Esophagus muscularis mucosa (tissue), 4 donors: ENCODE measurements at regions of chr1 and their contacts with region 1.

Region 1: GRCh38 chr1:161389691-161390558 is 22.2 kb upstream of the CFAP126 start:
- DNase-seq: peak; percentile 99
- H3K4me3 ChIP-seq: peak overlapping the region; percentile 57 to 86 (median 71)
- H3K27ac ChIP-seq: peak overlapping the region; percentile 91 to 93 (median 92)
- H3K4me1 ChIP-seq: peaks cover 8 to 15% (median 11%) of the 10 kb centered on the region in 4 donors
- H3K27me3 ChIP-seq: no peaks in the 10 kb centered on the region
- CTCF ChIP-seq: no peak
- EP300 ChIP-seq: peak; percentile 100
- POLR2A ChIP-seq: peak; percentile 77

Region 2: DNA sequence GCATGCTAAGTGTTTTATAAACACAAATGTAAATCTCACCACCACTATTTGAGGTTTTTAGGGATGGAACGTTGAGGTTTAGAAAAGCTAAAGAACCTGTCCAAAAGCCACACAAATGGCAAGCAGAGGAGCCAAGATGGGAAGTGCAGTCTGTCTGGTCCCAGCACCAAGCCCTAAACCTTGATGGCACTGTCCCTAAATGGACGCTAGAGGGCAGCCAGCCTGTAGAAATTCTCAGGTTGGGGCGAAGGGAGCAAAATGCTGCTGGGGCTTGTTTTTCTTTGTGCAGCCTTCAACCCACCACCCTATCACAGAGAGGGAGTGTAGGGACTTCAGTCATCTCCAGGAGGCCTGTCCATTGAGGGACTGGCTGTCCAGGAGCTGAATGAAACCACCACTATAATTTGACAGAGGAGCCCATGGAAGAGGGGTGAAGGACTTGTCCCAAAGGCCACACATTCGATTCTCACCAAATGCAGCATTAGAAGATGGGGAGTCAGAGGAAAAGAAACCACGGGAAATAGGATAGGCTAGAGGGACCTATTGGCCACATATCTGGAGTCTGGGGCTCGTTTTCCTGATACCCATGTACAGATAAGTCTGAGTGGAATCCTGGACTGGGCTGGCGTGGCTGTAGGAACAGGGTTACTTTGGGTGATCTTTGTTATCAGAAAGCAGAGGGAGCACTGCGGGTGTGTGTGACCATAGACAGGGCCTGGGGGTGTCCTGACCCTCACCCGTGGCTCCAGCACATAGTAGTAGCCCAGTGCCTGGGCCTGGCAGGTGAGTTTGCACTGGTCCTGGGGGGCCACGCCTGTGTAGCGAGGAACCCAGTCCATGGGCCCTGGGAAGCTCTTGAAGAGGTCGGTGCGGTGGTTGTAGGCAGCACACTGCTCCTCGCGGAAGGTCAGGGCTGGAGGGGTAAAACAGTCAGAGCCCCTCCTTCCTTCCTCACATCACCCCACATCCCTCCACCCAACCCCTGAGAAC is 197.2 kb before region 1 on chr1:
- intact Hi-C with region 1: loop called (anchors 10 kb)
- DNase-seq: no peak
- H3K4me3 ChIP-seq: peak overlapping the region in 1 of 4 donors; percentile 25
- H3K27ac ChIP-seq: peak overlapping the region in 3 of 4 donors; percentile 6 to 24 (median 12)
- H3K4me1 ChIP-seq: peaks cover 13 to 59% (median 45%) of the 10 kb centered on the region in 4 donors
- H3K27me3 ChIP-seq: no peaks in the 10 kb centered on the region
- CTCF ChIP-seq: peak; percentile 70 to 88 (median 81)
- EP300 ChIP-seq: no peak
- POLR2A ChIP-seq: no peak